ENCODE measurements at regions of chr7 and their contacts with region 1.

Region 1: DNA sequence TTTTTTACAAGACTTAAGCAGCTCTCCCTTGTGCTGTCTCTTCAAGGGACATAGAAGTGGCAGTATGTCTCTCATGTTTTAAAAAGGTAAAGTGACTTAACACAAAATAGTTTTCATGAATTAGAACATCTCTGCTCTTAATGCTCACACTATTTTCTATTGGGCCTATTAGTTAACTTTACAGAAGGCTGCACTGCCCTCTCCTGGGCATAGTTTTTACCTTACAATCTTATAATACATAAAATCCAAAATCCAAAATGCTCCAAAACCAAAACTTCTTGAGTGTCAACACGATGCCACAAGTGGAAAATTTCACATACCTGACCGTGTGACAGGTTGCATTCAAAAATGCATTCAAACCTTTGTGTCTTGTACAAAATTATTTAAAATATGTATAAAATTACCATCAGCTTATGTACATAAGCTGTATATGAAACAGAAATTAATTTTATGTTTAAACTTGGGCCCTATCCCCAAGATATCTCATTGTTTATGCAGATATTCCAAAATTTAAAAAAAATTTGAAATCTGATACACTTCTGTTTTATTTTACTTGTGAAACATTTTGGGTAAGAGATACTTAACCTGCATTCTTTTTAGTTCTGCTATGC is 25.8 kb downstream of the TES start:
- DNase-seq: no peak
- H3K4me3 ChIP-seq: peak overlapping the region; percentile 6 to 43 (median 39)
- H3K27ac ChIP-seq: peak overlapping the region in 3 of 4 donors; percentile 93 to 97 (median 96)
- H3K4me1 ChIP-seq: peaks cover 0 to 96% (median 68%) of the 10 kb centered on the region in 4 donors
- H3K27me3 ChIP-seq: no peaks in the 10 kb centered on the region
- CTCF ChIP-seq: peak; percentile 46 to 67 (median 64)
- EP300 ChIP-seq: no peak
- POLR2A ChIP-seq: no peak

Region 2: DNA sequence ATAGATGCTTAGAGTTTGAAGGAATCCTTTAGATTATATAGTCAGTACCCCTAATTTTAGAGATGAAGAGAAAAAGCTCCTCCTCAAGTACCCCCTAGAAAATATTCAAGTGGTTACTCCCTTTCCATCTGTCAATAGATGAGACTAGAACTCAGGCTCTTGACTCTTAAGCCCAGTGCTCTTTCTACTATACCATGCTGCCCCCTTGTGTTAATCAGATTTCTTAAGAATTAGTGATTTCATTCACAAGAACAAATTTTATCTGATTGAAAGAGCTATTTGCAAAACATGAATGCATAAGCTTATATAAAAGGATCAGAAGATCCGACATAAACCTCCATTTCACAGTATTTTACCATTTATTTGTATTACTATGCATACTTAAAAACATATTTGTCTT is 384.8 kb before region 1 on chr7:
- intact Hi-C with region 1: no loop called
- DNase-seq: no peak
- H3K4me3 ChIP-seq: no peak overlapping the region
- H3K27ac ChIP-seq: no peak overlapping the region
- H3K4me1 ChIP-seq: no peaks in the 10 kb centered on the region
- H3K27me3 ChIP-seq: no peaks in the 10 kb centered on the region
- CTCF ChIP-seq: peak in 2 of 4 experiments; percentile 17 to 38
- EP300 ChIP-seq: no peak
- POLR2A ChIP-seq: no peak

Region 3: GRCh38 chr7:116135306-116135705 is 100.8 kb before region 1 on chr7:
- intact Hi-C with region 1: no loop called
- DNase-seq: no peak
- H3K4me3 ChIP-seq: no peak overlapping the region
- H3K27ac ChIP-seq: no peak overlapping the region
- H3K4me1 ChIP-seq: peaks cover 0 to 24% (median 12%) of the 10 kb centered on the region in 4 donors
- H3K27me3 ChIP-seq: no peaks in the 10 kb centered on the region
- CTCF ChIP-seq: no peak
- EP300 ChIP-seq: no peak
- POLR2A ChIP-seq: no peak

Region 4: DNA sequence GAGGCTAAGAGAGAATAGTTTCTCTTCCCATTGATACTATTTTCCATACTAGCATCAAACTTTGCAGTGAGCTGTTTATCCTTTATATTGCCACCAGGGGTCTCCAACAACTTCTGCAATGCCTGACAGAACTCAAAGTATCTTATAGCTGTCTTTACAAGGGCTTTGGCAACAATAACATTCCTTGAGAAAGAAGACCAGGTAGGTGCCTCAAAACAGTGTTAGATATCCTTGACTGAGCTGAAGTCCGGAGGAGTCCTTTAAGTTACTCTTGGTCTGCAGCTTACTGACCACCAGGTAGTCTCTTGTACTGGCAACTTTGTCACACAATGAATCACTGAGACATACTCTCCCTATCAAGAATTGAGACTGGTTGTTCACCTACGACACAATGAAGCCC is 55.8 kb before region 1 on chr7:
- intact Hi-C with region 1: loop called (anchors 1 kb)
- DNase-seq: no peak
- H3K4me3 ChIP-seq: no peak overlapping the region
- H3K27ac ChIP-seq: no peak overlapping the region
- H3K4me1 ChIP-seq: peaks cover 0 to 14% (median 4%) of the 10 kb centered on the region in 4 donors
- H3K27me3 ChIP-seq: peaks cover 0 to 3% (median 0%) of the 10 kb centered on the region in 3 donors
- CTCF ChIP-seq: peak; percentile 59 to 84 (median 67)
- EP300 ChIP-seq: no peak
- POLR2A ChIP-seq: no peak

Region 5: DNA sequence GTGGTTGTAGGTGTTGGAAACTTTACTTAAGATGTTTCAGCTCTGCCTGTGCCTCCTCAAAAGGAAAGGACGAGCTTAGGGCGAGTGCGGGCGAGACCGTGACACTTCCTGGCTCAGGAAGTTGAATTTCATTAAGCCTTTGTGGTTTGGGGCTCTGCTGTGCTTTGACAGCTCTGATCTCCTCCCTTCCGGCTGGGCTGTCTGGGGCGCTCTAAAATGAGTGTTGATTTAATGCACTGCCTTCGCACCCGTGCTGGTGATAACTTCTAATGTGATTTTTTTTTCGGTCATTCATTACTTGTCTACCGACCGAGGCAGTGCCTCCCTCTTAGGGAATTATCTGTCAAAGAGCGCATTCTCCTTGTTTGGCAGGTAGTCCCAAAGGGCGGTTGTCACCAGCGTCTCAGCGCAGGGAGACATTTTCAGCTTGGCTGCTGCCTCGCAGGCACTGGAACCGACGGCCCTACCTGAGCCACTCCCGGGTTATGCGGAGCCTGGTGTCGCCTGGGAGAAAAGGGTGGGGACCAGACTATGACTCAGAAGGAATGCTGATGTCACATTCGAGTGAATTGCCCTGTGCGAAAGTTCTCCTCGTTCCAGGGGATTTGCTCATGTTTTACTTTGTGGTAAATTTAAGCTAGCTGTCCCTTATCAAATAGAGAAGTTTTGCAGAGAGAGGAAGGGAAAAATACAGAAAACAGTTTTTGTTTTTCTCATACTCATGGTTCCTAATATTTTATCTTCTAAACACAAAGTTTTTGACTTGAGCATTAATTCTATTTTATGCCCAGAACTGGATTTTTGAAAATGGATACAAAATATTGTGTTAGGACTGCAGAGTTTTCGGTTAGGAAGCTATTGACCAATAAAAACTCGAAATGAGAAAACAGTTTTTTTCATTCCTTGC is 24.9 kb before region 1 on chr7:
- intact Hi-C with region 1: loop called (anchors 2 kb)
- DNase-seq: peak; percentile 91
- H3K4me3 ChIP-seq: peak overlapping the region; percentile 48 to 94 (median 68)
- H3K27ac ChIP-seq: peak overlapping the region; percentile 93 to 97 (median 96)
- H3K4me1 ChIP-seq: peaks cover 0 to 34% (median 23%) of the 10 kb centered on the region in 4 donors
- H3K27me3 ChIP-seq: no peaks in the 10 kb centered on the region
- CTCF ChIP-seq: no peak
- EP300 ChIP-seq: no peak
- POLR2A ChIP-seq: peak; percentile 83 to 87

Region 6: GRCh38 chr7:116862234-116862950 is 626.3 kb after region 1 on chr7 and contains the start of gene CAPZA2:
- intact Hi-C with region 1: loop called (anchors 10 kb)
- DNase-seq: peak; percentile 96
- H3K4me3 ChIP-seq: peak within 1 kb of the TSS; percentile 80 to 97 (median 88)
- H3K27ac ChIP-seq: peak within 1 kb of the TSS; percentile 95 to 99 (median 97)
- H3K4me1 ChIP-seq: peaks cover 0 to 42% (median 30%) of the 10 kb centered on the region in 4 donors
- H3K27me3 ChIP-seq: no peaks in the 10 kb centered on the region
- CTCF ChIP-seq: peak; percentile 18 to 58 (median 46)
- EP300 ChIP-seq: peak in 2 of 4 donors; percentile 19 to 71
- POLR2A ChIP-seq: peak; percentile 42 to 67
- total RNA-seq, gene CAPZA2: 189 to 242 (median 234) TPM